GM23248 (cell line): ENCODE measurements at regions of chr3 and their contacts with region 1.

Region 1: DNA sequence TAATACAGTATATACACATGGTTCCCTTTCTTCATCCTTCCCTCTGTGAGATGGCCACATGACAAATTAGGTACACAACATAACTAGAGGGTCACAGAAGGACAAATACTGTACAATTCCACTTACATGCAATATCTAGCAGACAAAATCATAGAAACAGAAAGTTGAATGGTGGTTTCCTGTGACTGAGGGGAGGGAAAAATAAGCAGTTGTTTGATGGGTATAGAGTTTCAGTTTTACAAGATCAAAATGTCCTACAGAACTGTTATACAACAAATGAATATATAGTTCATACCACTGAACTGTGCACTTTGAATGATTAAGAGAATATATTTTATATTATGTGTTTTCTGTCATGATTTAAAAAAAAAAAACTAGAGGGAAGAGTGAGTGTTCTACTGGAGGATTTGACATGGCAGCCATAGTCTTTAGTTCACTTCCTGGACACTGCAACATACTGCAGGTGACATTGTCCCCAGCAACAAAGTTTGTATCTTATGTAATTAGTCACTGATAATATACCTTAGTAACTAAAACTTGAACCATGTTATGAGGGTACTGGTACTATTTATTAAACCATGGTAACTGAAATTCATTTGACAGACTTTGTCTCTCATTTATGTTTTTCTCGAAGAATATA is 37.2 kb downstream of the CCDC54 start:
- DNase-seq: no peak
- H3K4me3 ChIP-seq: no peak overlapping the region
- H3K27ac ChIP-seq: no peak overlapping the region
- H3K4me1 ChIP-seq: peaks cover 34% of the 10 kb centered on the region
- H3K27me3 ChIP-seq: no peaks in the 10 kb centered on the region

Region 2: GRCh38 chr3:107271787-107272387 is 142.6 kb before region 1 on chr3:
- in situ Hi-C with region 1: loop called (anchors 10 kb)
- DNase-seq: peak; percentile 82
- H3K4me3 ChIP-seq: no peak overlapping the region
- H3K27ac ChIP-seq: no peak overlapping the region
- H3K4me1 ChIP-seq: 0 out of 2 replicates have a peak, but pooled peaks cover 5% of the 10 kb centered on the region
- H3K27me3 ChIP-seq: no peaks in the 10 kb centered on the region

Region 3: DNA sequence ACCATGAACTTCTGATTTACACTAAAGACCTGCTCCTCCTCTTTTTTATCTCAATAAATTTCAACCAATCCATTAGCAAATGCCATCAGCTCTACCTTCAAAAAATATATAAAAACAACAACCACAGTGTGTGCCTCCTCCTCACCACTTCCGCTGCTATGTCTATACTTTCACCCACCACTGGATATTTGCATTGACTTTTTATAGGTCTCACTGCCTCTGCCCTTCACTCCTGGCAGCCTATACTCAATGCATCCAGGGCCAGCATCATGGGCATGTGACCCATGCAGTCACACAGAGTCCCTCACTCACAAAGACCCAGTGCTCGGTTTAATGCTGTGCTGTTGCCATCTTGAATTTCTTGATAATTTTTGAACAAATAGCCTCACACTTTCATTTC is 90.7 kb before region 1 on chr3:
- in situ Hi-C with region 1: no loop called
- DNase-seq: no peak
- H3K4me3 ChIP-seq: no peak overlapping the region
- H3K27ac ChIP-seq: no peak overlapping the region
- H3K4me1 ChIP-seq: no peaks in the 10 kb centered on the region
- H3K27me3 ChIP-seq: no peaks in the 10 kb centered on the region

Region 4: GRCh38 chr3:107643038-107643883 is 228.8 kb after region 1 on chr3:
- in situ Hi-C with region 1: no loop called
- DNase-seq: no peak
- H3K4me3 ChIP-seq: no peak overlapping the region
- H3K27ac ChIP-seq: no peak overlapping the region
- H3K4me1 ChIP-seq: peaks cover 18% of the 10 kb centered on the region
- H3K27me3 ChIP-seq: no peaks in the 10 kb centered on the region